Activated CD4-positive, alpha-beta T cell treated with anti-CD3 and anti-CD28 coated beads for 36 hours (primary cell): ENCODE measurements at regions of chr11 and their contacts with region 1.

Region 1: DNA sequence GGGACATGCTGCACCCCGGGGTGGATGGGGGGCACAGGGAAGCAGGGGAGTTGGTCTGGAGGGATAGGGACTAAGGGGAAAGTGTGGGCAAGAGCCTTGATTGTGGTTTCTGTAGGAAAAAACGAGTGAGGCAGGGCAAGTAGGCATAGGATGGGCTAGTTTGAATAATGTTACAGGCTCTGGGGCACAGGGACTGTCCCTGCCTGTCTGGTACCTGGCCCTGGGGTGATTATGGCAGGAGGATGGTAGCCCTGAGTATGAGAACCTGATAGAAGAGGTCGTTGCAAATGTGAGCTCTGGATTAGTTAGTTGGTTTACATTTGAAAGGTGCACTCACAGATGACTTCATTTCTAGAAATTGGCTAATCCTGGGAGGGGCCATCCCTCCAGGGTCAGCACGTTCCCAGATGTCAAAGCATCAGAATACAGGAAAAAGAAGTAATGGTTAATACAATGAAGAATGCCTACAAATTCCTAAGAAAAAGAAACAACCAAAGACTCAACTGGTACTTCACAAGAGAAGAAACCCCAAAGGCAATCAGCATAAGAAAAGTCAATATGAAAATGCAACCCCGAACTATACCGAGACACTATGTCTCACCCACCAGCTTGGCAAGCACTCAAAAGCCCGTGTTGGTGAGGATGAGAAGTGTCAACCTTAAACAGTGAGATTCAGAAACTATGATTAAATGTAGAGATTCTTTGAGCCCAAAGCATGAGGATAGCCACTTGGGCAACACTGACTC is 11.2 kb upstream of the SMIM38 start:
- DNase-seq: peak; percentile 73
- ATAC-seq: peak; percentile 92
- H3K4me3 Mint-ChIP-seq: no peak overlapping the region
- H3K27ac Mint-ChIP-seq: peak overlapping the region; percentile 69
- H3K4me1 Mint-ChIP-seq: peaks cover 17% of the 10 kb centered on the region
- H3K27me3 Mint-ChIP-seq: peaks cover 2% of the 10 kb centered on the region

Region 2: GRCh38 chr11:69166218-69167115 is 22.0 kb after region 1 on chr11:
- CTCF ChIA-PET with region 1: no interaction called
- POLR2A ChIA-PET with region 1: no interaction called
- intact Hi-C with region 1: loop called in 1 of 2 experiments (anchors 1 kb)
- DNase-seq: peak; percentile 77
- ATAC-seq: peak; percentile 99
- H3K4me3 Mint-ChIP-seq: no peak overlapping the region
- H3K27ac Mint-ChIP-seq: peak overlapping the region; percentile 77
- H3K4me1 Mint-ChIP-seq: peaks cover 18% of the 10 kb centered on the region
- H3K27me3 Mint-ChIP-seq: no peaks in the 10 kb centered on the region